Panc1 (cell line): ENCODE measurements at regions of chr19 and their contacts with region 1.

Region 1: DNA sequence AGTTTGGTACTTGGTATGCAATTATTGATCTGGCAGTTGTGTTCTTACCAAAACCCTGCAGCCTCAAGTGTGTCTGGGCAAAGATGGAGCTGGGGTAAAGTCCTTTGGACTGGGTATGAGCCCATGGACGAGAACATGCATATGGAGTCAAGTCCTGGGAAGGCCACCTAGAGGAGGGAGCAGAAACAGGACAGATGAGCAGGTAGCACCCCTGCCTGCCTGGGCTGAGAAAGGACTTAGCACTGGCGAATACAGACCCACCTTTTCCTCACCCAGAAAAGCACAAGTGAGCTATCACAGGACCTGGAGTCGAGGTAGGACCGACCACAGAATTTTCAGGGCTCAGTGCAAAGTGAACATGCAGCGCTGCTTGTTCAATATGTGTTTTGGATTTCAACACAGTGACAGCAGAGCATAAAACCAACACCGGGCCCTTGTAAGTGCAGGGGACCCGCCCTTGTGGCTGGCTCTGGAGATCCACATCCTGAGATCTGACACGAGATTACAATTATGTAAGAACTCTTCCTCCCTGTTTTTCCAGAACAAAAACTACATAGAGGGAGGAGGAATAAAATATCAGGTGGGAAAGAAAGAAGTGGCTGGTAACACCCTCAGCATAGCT is 26.0 kb downstream of the IGFL2 start:
- DNase-seq: no peak
- ATAC-seq: no peak
- H3K4me3 ChIP-seq: no peak overlapping the region
- H3K27ac ChIP-seq: no peak overlapping the region
- H3K4me1 ChIP-seq: no peaks in the 10 kb centered on the region
- H3K27me3 ChIP-seq: no peaks in the 10 kb centered on the region; the same call in 1 of the 2 replicates
- CTCF ChIP-seq: no peak

Region 2: GRCh38 chr19:45827459-45828093 is 346.4 kb before region 1 on chr19:
- CTCF ChIA-PET with region 1: no interaction called
- POLR2A ChIA-PET with region 1: interaction called, 13 read pairs
- in situ Hi-C with region 1: no loop called
- intact Hi-C with region 1: no loop called
- DNase-seq: no peak
- ATAC-seq: no peak
- H3K4me3 ChIP-seq: no peak overlapping the region
- H3K27ac ChIP-seq: no peak overlapping the region
- H3K4me1 ChIP-seq: no peaks in the 10 kb centered on the region; the same call in 1 of the 2 replicates
- H3K27me3 ChIP-seq: no peaks in the 10 kb centered on the region
- CTCF ChIP-seq: no peak